Posterior vena cava (tissue), 2 donors: ENCODE measurements at regions of chr18 and their contacts with region 1.

Region 1: GRCh38 chr18:25360301-25360899 is 8.4 kb upstream of the ZNF521 start:
- DNase-seq: no peak

Region 2: DNA sequence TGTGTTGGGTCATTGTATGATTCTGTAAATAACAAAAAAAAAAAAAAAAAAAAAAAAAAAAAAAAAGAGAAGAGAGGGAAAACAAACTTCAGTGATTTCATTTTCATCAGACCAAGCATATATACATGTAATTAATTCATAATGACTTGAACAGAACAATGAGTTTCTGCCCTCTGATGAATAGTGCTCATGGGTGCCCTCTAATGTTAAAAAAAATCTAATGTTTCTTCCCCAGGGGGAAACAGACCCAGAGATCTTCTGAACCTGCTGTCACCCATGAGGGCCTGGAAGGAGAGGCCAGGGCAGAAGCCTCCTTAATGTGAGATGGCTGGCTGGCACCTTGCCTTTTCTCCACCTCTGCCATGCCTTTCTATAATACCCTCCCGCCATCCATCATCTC is 297.7 kb before region 1 on chr18:
- intact Hi-C with region 1: loop called in 1 of 2 experiments (anchors 10 kb)
- DNase-seq: no peak

Region 3: DNA sequence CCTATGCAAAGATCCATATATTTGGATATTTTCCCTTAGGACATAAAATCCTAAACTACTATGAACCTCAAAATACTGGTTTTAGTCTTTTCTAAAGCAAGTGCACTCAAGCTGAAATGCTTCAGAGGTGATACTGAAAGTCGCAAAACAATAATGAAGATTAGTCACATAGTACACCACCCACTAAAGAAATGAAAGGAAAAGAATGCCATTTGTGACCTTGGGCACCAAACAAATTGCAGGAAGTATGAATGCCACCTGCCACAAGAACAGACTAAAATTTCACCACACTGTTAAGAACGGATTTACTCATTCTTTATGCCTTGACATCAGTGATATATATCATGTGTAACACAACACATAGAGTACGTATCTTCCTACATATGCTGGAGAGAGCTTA is 169.9 kb before region 1 on chr18:
- intact Hi-C with region 1: no loop called
- DNase-seq: no peak

Region 4: DNA sequence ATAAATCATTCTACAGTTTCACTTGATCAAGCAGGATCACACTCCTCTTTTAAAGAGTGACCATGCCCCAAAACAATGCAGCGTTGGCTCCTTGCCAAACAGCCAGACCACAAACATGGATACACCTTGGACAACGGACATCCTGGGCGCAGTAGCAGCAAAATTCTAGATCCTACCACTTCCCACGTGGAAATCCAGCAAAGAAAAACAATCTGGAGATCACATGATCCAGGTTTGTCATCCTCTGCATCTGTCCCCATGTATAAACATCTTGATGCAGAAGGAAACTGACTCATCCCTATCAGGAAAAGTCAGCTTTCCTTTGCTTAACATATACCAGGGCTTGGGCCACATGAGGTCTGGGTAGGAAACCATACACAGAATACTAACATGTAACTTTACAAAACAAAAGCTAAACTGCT is 61.5 kb before region 1 on chr18:
- intact Hi-C with region 1: no loop called
- DNase-seq: no peak